ENCODE measurements at regions of chr4 and their contacts with region 1.

Region 1: GRCh38 chr4:97548943-97549583 is 594.2 kb downstream of the STPG2 start:
- DNase-seq: no peak
- H3K4me3 ChIP-seq: no peak overlapping the region
- H3K27ac ChIP-seq: no peak overlapping the region
- H3K4me1 ChIP-seq: no peaks in the 10 kb centered on the region
- H3K27me3 ChIP-seq: no peaks in the 10 kb centered on the region
- CTCF ChIP-seq: no peak

Region 2: GRCh38 chr4:97691111-97691605 is 142.1 kb after region 1 on chr4:
- CTCF ChIA-PET with region 1: no interaction called
- POLR2A ChIA-PET with region 1: no interaction called
- intact Hi-C with region 1: no loop called
- DNase-seq: no peak
- H3K4me3 ChIP-seq: no peak overlapping the region
- H3K27ac ChIP-seq: no peak overlapping the region
- H3K4me1 ChIP-seq: no peaks in the 10 kb centered on the region
- H3K27me3 ChIP-seq: no peaks in the 10 kb centered on the region
- CTCF ChIP-seq: no peak

Region 3: GRCh38 chr4:98267498-98267897 is 718.4 kb after region 1 on chr4:
- CTCF ChIA-PET with region 1: no interaction called
- POLR2A ChIA-PET with region 1: no interaction called
- intact Hi-C with region 1: no loop called
- DNase-seq: no peak
- H3K4me3 ChIP-seq: no peak overlapping the region
- H3K27ac ChIP-seq: no peak overlapping the region
- H3K4me1 ChIP-seq: peaks cover 6% of the 10 kb centered on the region
- H3K27me3 ChIP-seq: no peaks in the 10 kb centered on the region
- CTCF ChIP-seq: no peak

Region 4: GRCh38 chr4:98688411-98689290 is 1139.6 kb after region 1 on chr4:
- CTCF ChIA-PET with region 1: no interaction called
- POLR2A ChIA-PET with region 1: no interaction called
- intact Hi-C with region 1: no loop called
- DNase-seq: no peak
- H3K4me3 ChIP-seq: no peak overlapping the region
- H3K27ac ChIP-seq: no peak overlapping the region
- H3K4me1 ChIP-seq: no peaks in the 10 kb centered on the region
- H3K27me3 ChIP-seq: no peaks in the 10 kb centered on the region
- CTCF ChIP-seq: no peak

Region 5: GRCh38 chr4:98838977-98839618 is 1290.0 kb after region 1 on chr4:
- CTCF ChIA-PET with region 1: no interaction called
- POLR2A ChIA-PET with region 1: interaction called, 14 read pairs
- intact Hi-C with region 1: no loop called
- DNase-seq: peak; percentile 65
- H3K4me3 ChIP-seq: no peak overlapping the region
- H3K27ac ChIP-seq: no peak overlapping the region
- H3K4me1 ChIP-seq: peaks cover 8% of the 10 kb centered on the region
- H3K27me3 ChIP-seq: no peaks in the 10 kb centered on the region
- CTCF ChIP-seq: 0 out of 2 replicates have a peak, but pooled peaks have one; percentile 13